ENCODE measurements at regions of chr1 and their contacts with region 1.

Region 1: GRCh38 chr1:52636721-52637695 is 4.0 kb downstream of the SHISAL2A start:
- DNase-seq: peak; percentile 89
- ATAC-seq: peak; percentile 59
- H3K4me3 Mint-ChIP-seq: peak overlapping the region; percentile 64
- H3K27ac Mint-ChIP-seq: peak overlapping the region; percentile 98
- H3K4me1 Mint-ChIP-seq: peaks cover 70% of the 10 kb centered on the region
- H3K27me3 Mint-ChIP-seq: no peaks in the 10 kb centered on the region
- CTCF ChIP-seq: no peak

Region 2: GRCh38 chr1:52552505-52553361 is 84.3 kb before region 1 on chr1 and contains the start of gene TUT4:
- CTCF ChIA-PET with region 1: interaction called, 3 read pairs
- POLR2A ChIA-PET with region 1: interaction called, 20 read pairs
- intact Hi-C with region 1: loop called (anchors 5 kb)
- DNase-seq: peak; percentile 84
- ATAC-seq: peak; percentile 67
- H3K4me3 Mint-ChIP-seq: no peak within 1 kb of the TSS
- H3K27ac Mint-ChIP-seq: peak within 1 kb of the TSS; percentile 65
- H3K4me1 Mint-ChIP-seq: peaks cover 38% of the 10 kb centered on the region
- H3K27me3 Mint-ChIP-seq: no peaks in the 10 kb centered on the region
- CTCF ChIP-seq: no peak
- total RNA-seq, gene TUT4: 51.6 to 59.0 TPM

Region 3: GRCh38 chr1:52601991-52602855 is 34.8 kb before region 1 on chr1 and contains the start of gene GPX7:
- CTCF ChIA-PET with region 1: interaction called, 3 read pairs
- POLR2A ChIA-PET with region 1: interaction called, 14 read pairs
- intact Hi-C with region 1: no loop called
- DNase-seq: peak; percentile 63
- ATAC-seq: peak; percentile 71
- H3K4me3 Mint-ChIP-seq: peak within 1 kb of the TSS; percentile 89
- H3K27ac Mint-ChIP-seq: peak within 1 kb of the TSS; percentile 96
- H3K4me1 Mint-ChIP-seq: peaks cover 41% of the 10 kb centered on the region
- H3K27me3 Mint-ChIP-seq: no peaks in the 10 kb centered on the region
- CTCF ChIP-seq: no peak
- total RNA-seq, gene GPX7: 21.5 TPM

Region 4: GRCh38 chr1:52706941-52707926 is 70.2 kb after region 1 on chr1:
- CTCF ChIA-PET with region 1: no interaction called
- POLR2A ChIA-PET with region 1: no interaction called
- intact Hi-C with region 1: no loop called
- DNase-seq: no peak
- ATAC-seq: no peak
- H3K4me3 Mint-ChIP-seq: no peak overlapping the region
- H3K27ac Mint-ChIP-seq: no peak overlapping the region
- H3K4me1 Mint-ChIP-seq: peaks cover 8% of the 10 kb centered on the region
- H3K27me3 Mint-ChIP-seq: no peaks in the 10 kb centered on the region
- CTCF ChIP-seq: no peak